CD4-positive, alpha-beta memory T cell (primary cell): ENCODE measurements at regions of chr12 and their contacts with region 1.

Region 1: GRCh38 chr12:121668750-121669520 is 519 bp downstream of the MORN3 start:
- DNase-seq: peak; percentile 36 to 62 (median 48)
- H3K4me3 ChIP-seq: no peak overlapping the region
- H3K4me3 Mint-ChIP-seq: peak overlapping the region in 4 of 8 donors; percentile 21 to 62 (median 46)
- H3K27ac ChIP-seq: no peak overlapping the region
- H3K27ac Mint-ChIP-seq: peak overlapping the region; percentile 70 to 91 (median 84)
- H3K4me1 ChIP-seq: peaks cover 62% of the 10 kb centered on the region
- H3K4me1 Mint-ChIP-seq: peaks cover 26 to 71% (median 48%) of the 10 kb centered on the region in 4 donors
- H3K27me3 ChIP-seq: no peaks in the 10 kb centered on the region
- H3K27me3 Mint-ChIP-seq: no peaks in the 10 kb centered on the region

Region 2: GRCh38 chr12:121494093-121494787 is 174.7 kb before region 1 on chr12:
- CTCF ChIA-PET with region 1: interaction called, 21 read pairs
- POLR2A ChIA-PET with region 1: no interaction called
- intact Hi-C with region 1: no loop called
- DNase-seq: peak; percentile 44 to 59 (median 56)
- H3K4me3 ChIP-seq: no peak overlapping the region
- H3K4me3 Mint-ChIP-seq: no peak overlapping the region
- H3K27ac ChIP-seq: no peak overlapping the region
- H3K27ac Mint-ChIP-seq: peak overlapping the region in 4 of 7 donors; percentile 41 to 93 (median 56)
- H3K4me1 ChIP-seq: peaks cover 12% of the 10 kb centered on the region
- H3K4me1 Mint-ChIP-seq: peaks cover 10 to 20% (median 15%) of the 10 kb centered on the region in 4 donors
- H3K27me3 ChIP-seq: no peaks in the 10 kb centered on the region
- H3K27me3 Mint-ChIP-seq: no peaks in the 10 kb centered on the region

Region 3: DNA sequence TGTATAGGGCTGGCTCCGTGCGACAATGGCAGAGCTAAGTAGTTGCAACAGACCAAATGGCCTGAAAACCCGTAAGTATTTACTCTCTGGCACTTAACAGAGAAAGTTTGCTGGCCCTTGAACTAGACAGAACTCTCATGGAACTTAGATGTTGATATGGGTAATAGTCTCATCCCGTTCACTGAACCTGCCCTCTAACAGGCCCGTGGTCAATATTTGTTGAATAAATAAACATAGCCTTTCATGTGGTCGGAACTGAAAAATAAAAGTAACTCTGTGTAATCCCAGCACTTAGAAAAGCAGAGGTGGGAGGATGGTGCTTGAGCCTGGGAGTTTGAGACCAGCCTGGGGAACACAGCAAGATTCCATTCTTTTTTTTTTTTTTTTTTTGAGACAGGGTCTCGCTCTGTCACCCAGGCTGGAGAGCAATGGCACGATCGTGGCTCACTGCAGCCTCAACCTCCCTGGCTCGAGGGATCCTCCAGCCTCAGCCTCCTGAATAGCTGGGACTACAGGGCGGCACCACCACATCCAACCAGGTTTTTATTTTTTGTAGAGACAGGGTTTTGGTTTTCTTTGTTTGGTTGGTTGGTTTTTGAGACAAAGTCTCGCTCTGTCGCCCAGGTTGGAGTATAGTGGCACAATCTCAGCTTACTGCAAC is 117.8 kb before region 1 on chr12:
- CTCF ChIA-PET with region 1: interaction called, 124 read pairs
- POLR2A ChIA-PET with region 1: interaction called, 42 read pairs
- intact Hi-C with region 1: loop called (anchors 1 kb)
- DNase-seq: no peak
- H3K4me3 ChIP-seq: no peak overlapping the region
- H3K4me3 Mint-ChIP-seq: no peak overlapping the region
- H3K27ac ChIP-seq: no peak overlapping the region
- H3K27ac Mint-ChIP-seq: peak overlapping the region in 2 of 7 donors; percentile 42 to 64
- H3K4me1 ChIP-seq: no peaks in the 10 kb centered on the region
- H3K4me1 Mint-ChIP-seq: peaks cover 3 to 7% (median 5%) of the 10 kb centered on the region in 4 donors
- H3K27me3 ChIP-seq: no peaks in the 10 kb centered on the region
- H3K27me3 Mint-ChIP-seq: no peaks in the 10 kb centered on the region

Region 4: GRCh38 chr12:121637231-121637914 is 31.6 kb before region 1 on chr12:
- CTCF ChIA-PET with region 1: interaction called, 169 read pairs
- POLR2A ChIA-PET with region 1: interaction called, 305 read pairs
- intact Hi-C with region 1: no loop called
- DNase-seq: peak; percentile 36 to 64 (median 49)
- H3K4me3 ChIP-seq: peak overlapping the region in 1 of 2 donors; percentile 23
- H3K4me3 Mint-ChIP-seq: peak overlapping the region; percentile 13 to 84 (median 68)
- H3K27ac ChIP-seq: peak overlapping the region; percentile 59
- H3K27ac Mint-ChIP-seq: peak overlapping the region; percentile 89 to 93 (median 90)
- H3K4me1 ChIP-seq: peaks cover 58% of the 10 kb centered on the region
- H3K4me1 Mint-ChIP-seq: peaks cover 31 to 59% (median 44%) of the 10 kb centered on the region in 4 donors
- H3K27me3 ChIP-seq: no peaks in the 10 kb centered on the region
- H3K27me3 Mint-ChIP-seq: no peaks in the 10 kb centered on the region

Region 5: DNA sequence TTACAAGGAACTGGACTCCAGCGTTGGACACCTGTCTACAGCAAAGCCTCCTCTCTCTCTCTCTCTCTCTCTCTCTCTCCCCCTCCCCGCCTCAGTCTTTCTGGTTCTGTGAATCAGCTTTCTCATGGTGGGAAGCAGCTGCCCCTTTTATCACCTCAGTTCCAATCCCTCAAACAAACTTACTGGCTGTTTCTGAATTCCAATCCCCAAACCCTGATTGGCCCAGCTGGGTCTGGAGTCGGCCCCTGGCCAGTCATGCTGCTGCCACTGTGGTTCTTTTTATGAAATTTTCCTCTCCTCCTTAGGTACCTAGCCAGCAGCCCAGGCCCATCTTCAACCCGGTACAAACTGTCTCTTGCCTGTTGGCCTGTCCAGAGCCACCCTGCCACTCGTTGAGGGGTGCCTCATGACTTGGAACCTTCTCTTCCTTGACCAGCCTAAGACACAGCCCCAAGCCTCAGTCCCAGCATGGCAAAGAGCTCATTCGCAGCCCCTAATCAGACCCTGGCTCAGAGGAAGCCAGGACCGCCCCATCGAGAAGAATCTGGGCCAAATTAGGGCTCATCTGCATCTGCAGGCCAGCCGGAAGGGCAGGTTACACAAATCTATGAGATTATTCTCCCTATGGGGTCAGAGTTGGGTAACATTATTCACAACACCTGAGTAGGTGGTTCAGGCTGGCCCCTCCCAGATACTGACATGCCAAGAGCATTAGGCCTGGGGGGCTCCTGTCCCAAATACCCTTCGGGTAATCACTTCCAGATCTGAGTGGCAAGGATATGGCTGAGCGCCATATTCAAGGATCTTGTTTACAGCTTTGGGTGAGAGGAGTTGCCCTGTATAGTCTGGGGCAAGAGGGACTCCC is 10.0 kb after region 1 on chr12:
- CTCF ChIA-PET with region 1: interaction called, 20 read pairs
- POLR2A ChIA-PET with region 1: interaction called, 13 read pairs
- intact Hi-C with region 1: no loop called
- DNase-seq: no peak
- H3K4me3 ChIP-seq: no peak overlapping the region
- H3K4me3 Mint-ChIP-seq: no peak overlapping the region
- H3K27ac ChIP-seq: no peak overlapping the region
- H3K27ac Mint-ChIP-seq: peak overlapping the region in 4 of 7 donors; percentile 18 to 70 (median 50)
- H3K4me1 ChIP-seq: peaks cover 3% of the 10 kb centered on the region
- H3K4me1 Mint-ChIP-seq: peaks cover 4 to 10% (median 5%) of the 10 kb centered on the region in 4 donors
- H3K27me3 ChIP-seq: no peaks in the 10 kb centered on the region
- H3K27me3 Mint-ChIP-seq: no peaks in the 10 kb centered on the region

Region 6: GRCh38 chr12:121793838-121794533 is 125.1 kb after region 1 on chr12:
- CTCF ChIA-PET with region 1: interaction called, 6 read pairs
- POLR2A ChIA-PET with region 1: interaction called, 13 read pairs
- intact Hi-C with region 1: no loop called
- DNase-seq: peak; percentile 94 to 98 (median 95)
- H3K4me3 ChIP-seq: peak overlapping the region; percentile 67 to 99
- H3K4me3 Mint-ChIP-seq: peak overlapping the region; percentile 78 to 94 (median 87)
- H3K27ac ChIP-seq: peak overlapping the region; percentile 97
- H3K27ac Mint-ChIP-seq: peak overlapping the region; percentile 97 to 99 (median 97)
- H3K4me1 ChIP-seq: peaks cover 64% of the 10 kb centered on the region
- H3K4me1 Mint-ChIP-seq: peaks cover 32 to 72% (median 54%) of the 10 kb centered on the region in 4 donors
- H3K27me3 ChIP-seq: no peaks in the 10 kb centered on the region
- H3K27me3 Mint-ChIP-seq: no peaks in the 10 kb centered on the region